Heart left ventricle (tissue), 16 donors: ENCODE measurements at regions of chr20 and their contacts with region 1.

Region 1: GRCh38 chr20:33933469-33933909 is 60.2 kb upstream of the RALY start:
- DNase-seq: peak; percentile 45 to 66 (median 61)
- ATAC-seq: peak; percentile 78 to 92 (median 92)
- H3K4me3 ChIP-seq: no peak overlapping the region
- H3K27ac ChIP-seq: peak overlapping the region in 5 of 12 donors; percentile 12 to 70 (median 30)
- H3K4me1 ChIP-seq: peaks cover 0 to 3% (median 0%) of the 10 kb centered on the region in 12 donors
- H3K27me3 ChIP-seq: no peaks in the 10 kb centered on the region
- CTCF ChIP-seq: peak; percentile 33 to 71 (median 53)
- POLR2A ChIP-seq: no peak

Region 2: DNA sequence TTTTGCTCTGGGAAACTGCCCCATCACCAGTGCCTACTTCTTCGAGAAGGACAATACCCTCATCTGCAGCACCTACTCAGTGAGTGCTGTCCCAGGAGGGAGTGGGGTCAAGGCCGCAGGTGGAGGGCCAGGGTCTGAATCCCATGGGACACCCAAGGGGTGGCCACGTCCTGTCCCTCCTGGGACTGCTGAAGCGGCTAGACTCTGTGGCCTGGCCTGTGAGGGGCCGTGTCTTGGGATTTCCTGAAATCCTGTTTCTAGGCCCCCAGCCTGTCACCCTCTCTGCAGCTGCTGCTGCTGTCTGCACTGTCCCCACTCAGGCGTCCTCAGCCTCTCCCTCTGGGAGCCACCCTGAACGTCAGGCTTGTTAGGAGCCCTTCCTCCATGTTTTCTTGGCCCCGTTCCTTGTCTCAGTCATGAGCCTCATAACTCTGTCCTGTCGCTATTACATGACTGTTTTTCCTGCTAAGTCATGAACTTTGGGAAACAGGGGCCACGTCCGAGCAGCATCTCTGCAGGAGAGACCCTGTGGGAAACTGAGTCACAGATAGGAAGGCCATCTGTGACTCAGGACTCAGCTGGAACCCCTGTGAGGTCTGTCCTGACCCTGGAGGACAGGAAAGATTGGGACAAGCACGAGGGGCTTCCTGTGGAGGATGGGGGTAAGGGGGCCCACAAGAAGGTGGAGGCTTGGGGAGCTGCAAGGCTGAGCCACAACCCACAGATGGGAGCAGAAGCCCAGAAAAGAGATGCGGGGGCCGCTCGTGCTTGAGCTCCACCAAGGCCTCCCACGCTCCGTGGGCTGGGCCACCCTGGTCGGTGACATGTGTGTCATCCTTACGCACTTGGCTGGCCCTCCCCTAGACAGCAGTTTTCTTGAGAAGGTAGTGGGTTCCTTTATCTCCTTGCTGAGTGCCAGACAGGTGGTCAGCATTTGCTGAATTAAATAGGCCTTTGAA is 1024.9 kb before region 1 on chr20:
- intact Hi-C with region 1: no loop called
- DNase-seq: peak in 1 of 5 donors; percentile 45
- ATAC-seq: no peak
- H3K4me3 ChIP-seq: no peak overlapping the region
- H3K27ac ChIP-seq: no peak overlapping the region
- H3K4me1 ChIP-seq: no peaks in the 10 kb centered on the region
- H3K27me3 ChIP-seq: no peaks in the 10 kb centered on the region
- CTCF ChIP-seq: no peak
- POLR2A ChIP-seq: no peak

Region 3: GRCh38 chr20:33986560-33987216 is 53.2 kb after region 1 on chr20:
- intact Hi-C with region 1: loop called in 1 of 10 experiments (anchors 5 kb)
- DNase-seq: no peak
- ATAC-seq: no peak
- H3K4me3 ChIP-seq: no peak overlapping the region
- H3K27ac ChIP-seq: no peak overlapping the region
- H3K4me1 ChIP-seq: peaks cover 0 to 13% (median 0%) of the 10 kb centered on the region in 12 donors
- H3K27me3 ChIP-seq: no peaks in the 10 kb centered on the region
- CTCF ChIP-seq: no peak
- POLR2A ChIP-seq: no peak